ENCODE measurements at regions of chr11 and their contacts with region 1.

Region 1: DNA sequence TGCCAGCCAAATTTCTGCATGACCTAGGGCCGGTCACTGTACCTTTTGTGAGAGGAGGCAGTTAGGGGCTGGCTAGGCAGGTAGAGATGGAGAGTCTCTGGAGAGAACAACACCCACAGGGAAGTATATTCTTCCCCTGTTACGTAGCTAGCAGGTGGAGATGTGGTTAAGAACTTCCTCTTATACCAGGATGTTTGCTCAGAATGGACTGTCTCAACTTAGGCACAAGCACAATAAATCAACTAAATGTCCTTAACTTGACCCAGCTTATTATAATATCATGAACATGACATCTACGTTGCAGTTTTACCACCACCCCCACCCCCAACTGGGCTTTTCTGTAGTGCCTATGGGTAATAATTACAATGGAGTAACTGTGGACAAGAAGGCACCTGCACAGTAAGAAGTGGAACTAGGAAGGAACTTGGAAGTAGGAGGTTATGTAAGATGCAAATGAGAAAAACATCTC is 60.7 kb upstream of the MPEG1 start:
- DNase-seq: peak; percentile 97
- H3K4me3 ChIP-seq: peak overlapping the region; percentile 56
- H3K27ac ChIP-seq: peak overlapping the region; percentile 97
- H3K4me1 ChIP-seq: peaks cover 74% of the 10 kb centered on the region
- CTCF ChIP-seq: no peak

Region 2: DNA sequence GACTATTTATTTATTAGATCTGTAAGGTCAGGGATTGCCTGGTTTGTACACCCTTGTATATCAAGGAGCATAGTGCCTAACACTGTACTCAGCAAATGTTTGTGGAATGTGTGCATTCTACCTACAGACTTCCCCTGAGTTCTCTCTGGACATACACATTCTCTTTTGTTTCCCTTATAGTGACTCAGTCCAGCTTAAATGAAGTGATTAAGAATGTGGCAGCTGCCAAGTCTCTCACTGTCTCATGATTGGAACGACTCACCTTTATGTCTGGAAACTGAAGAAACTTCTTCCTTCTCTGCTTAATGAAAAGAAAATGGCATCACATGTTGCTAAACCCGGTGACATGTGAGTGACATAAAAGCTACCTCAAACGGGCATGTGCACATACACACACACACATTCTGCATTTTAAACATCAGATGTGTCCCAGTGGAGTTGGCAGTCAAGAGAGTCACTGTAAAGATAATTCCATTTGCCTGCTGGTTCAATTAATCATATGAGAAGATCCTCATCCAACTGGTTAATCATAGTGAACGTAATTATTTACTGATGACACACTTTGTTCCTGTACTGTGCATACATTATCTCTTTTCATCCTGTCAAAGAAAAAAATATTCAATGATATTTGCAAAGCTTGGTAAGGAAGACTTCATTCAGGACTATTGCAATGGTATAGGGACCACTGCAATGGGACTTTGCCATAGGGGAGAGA is 584.5 kb before region 1 on chr11:
- CTCF ChIA-PET with region 1: no interaction called
- POLR2A ChIA-PET with region 1: no interaction called
- intact Hi-C with region 1: no loop called
- DNase-seq: no peak
- H3K4me3 ChIP-seq: no peak overlapping the region
- H3K27ac ChIP-seq: no peak overlapping the region
- H3K4me1 ChIP-seq: no peaks in the 10 kb centered on the region
- CTCF ChIP-seq: no peak

Region 3: DNA sequence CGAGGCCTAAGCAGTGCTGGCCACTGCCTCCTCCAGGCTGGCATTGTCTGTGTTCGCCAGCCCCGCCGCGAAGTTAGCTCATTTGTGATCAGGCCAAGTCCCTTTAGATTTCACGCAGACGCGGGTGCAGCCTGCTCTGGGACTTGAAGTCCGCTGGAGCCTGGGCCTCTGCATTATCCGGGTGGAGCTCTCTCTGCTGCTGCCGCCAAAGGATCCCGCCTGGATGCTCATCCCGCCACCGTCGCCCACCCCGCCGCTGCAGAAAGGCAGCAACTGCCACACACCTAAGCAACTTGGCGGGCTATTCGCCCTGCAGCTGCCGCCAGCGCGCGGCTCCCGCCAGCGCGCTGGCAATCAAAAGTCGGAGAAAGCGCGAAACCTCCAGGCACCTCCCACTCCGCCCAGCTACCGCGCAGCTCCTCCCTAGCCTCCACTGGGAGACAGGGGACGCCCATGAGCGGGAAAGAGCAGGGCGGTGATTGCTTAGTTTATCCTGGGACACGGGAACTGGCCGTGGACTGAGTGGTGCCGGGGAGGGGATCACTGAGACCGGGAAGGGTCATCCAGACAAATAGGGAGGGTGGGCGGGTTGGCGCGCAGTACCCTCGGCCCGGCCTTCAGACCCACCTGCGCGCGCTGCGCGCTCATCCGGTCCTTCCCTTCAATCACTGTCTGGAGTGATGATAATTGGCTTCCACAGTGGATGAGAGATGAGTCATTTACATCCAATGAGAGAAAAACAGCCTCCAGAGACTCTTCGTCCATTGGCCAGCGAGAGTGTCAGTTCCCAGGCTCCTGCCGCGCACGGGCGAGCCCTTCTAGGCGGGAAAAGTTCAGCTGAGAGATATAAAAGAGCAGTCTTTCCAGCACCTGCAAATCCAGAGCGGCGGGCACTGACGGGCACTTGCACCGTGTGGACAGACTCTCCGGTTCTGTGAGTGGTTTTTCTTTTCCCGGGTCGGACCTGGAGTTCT is 166.8 kb before region 1 on chr11 and contains the start of gene FAM111B:
- CTCF ChIA-PET with region 1: no interaction called
- POLR2A ChIA-PET with region 1: interaction called, 5 read pairs
- intact Hi-C with region 1: loop called (anchors 2 kb)
- DNase-seq: peak; percentile 91
- H3K4me3 ChIP-seq: peak within 1 kb of the TSS; percentile 88
- H3K27ac ChIP-seq: peak within 1 kb of the TSS; percentile 70
- H3K4me1 ChIP-seq: peaks cover 77% of the 10 kb centered on the region
- CTCF ChIP-seq: peak; percentile 35
- total RNA-seq, gene FAM111B: 30.3 and 37.6 TPM in 2 replicates

Region 4: GRCh38 chr11:59263225-59263894 is 10.0 kb before region 1 on chr11:
- CTCF ChIA-PET with region 1: interaction called, 10 read pairs
- POLR2A ChIA-PET with region 1: interaction called, 39 read pairs
- intact Hi-C with region 1: no loop called
- DNase-seq: peak; percentile 84
- H3K4me3 ChIP-seq: no peak overlapping the region
- H3K27ac ChIP-seq: no peak overlapping the region
- H3K4me1 ChIP-seq: peaks cover 56% of the 10 kb centered on the region
- CTCF ChIP-seq: peak; percentile 92

Region 5: DNA sequence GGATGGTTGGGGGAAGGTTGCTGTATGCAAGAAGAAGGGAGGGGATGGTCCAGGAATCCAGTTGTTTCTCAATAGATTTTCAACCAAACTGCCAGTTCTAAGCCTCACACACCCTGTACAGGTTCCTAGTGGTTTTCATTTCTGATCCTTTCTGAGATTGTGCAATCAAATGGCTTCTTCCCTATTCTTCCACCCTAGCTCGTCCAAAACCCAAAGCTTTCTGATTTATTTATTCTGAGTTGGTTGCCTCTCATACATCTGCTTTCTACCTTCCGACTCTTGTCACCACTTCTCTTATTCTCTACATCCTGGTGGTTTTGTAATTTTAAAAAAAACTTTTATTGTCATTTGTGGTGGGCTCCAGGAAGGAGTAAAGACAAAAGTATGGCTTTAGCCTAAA is 140.2 kb after region 1 on chr11:
- CTCF ChIA-PET with region 1: no interaction called
- POLR2A ChIA-PET with region 1: no interaction called
- intact Hi-C with region 1: no loop called
- DNase-seq: no peak
- H3K4me3 ChIP-seq: no peak overlapping the region
- H3K27ac ChIP-seq: no peak overlapping the region
- H3K4me1 ChIP-seq: no peaks in the 10 kb centered on the region
- CTCF ChIP-seq: no peak

Region 6: DNA sequence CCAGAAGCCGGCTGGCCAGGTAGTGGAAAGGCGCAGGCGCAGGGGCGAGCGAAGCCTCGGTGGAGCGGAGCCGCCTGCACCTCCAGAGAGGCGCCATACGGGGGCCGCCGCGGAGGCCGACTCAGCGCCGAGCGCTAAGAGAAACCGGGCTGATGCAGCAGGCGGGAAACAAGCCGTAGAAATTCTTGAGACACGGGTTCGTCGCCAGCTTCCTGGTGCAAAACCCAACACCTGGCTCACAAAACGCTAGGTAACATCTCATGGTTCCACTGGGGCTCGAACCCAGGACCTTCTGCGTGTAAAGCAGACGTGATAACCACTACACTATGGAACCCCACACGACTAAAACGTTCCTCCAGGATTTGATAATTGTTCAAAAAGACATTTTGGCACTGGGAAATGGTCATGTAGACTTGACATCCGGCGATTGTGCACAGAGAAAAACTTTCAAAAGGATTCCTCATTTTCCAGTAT is 277.0 kb after region 1 on chr11:
- CTCF ChIA-PET with region 1: no interaction called
- POLR2A ChIA-PET with region 1: interaction called, 3 read pairs
- intact Hi-C with region 1: loop called (anchors 5 kb)
- DNase-seq: peak; percentile 95
- H3K4me3 ChIP-seq: peak overlapping the region; percentile 72
- H3K27ac ChIP-seq: peak overlapping the region; percentile 91
- H3K4me1 ChIP-seq: peaks cover 24% of the 10 kb centered on the region
- CTCF ChIP-seq: peak; percentile 65

Region 7: GRCh38 chr11:59668950-59669610 is 395.7 kb after region 1 on chr11 and contains the start of gene PATL1:
- CTCF ChIA-PET with region 1: no interaction called
- POLR2A ChIA-PET with region 1: no interaction called
- intact Hi-C with region 1: loop called (anchors 5 kb)
- DNase-seq: peak; percentile 98
- H3K4me3 ChIP-seq: peak within 1 kb of the TSS; percentile 99
- H3K27ac ChIP-seq: peak within 1 kb of the TSS; percentile 47
- H3K4me1 ChIP-seq: peaks cover 19% of the 10 kb centered on the region
- CTCF ChIP-seq: no peak
- total RNA-seq, gene PATL1: 14.7 and 15.2 TPM in 2 replicates

Region 8: DNA sequence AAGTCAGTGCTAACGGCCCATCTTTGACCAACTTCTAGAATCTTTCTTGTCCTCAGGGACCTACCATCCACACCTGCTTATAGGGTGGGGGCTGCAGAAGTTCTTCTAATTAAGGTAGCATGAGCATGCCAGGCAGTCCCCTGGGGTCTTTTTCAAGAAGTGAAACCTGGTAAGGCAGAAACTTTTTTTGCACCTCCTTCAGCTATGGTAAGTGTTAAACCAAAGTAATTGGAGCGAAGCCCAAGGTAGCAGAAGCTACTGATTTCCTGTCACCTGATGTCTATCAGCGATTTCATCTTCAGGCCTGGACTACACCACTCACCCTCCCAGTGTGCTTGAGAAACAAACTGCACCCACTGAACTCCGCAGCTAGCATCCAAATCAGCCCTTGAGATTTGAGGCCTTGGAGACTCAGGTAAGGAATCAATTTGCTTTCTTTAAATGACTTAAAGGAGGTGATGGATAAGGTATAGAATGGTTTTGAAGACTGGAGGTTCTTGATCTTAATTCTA is 1182.2 kb after region 1 on chr11 and contains the start of gene MS4A1:
- CTCF ChIA-PET with region 1: no interaction called
- POLR2A ChIA-PET with region 1: no interaction called
- intact Hi-C with region 1: loop called (anchors 2 kb)
- DNase-seq: peak; percentile 100
- H3K4me3 ChIP-seq: peak within 1 kb of the TSS; percentile 84
- H3K27ac ChIP-seq: peak within 1 kb of the TSS; percentile 100
- H3K4me1 ChIP-seq: peaks cover 49% of the 10 kb centered on the region
- CTCF ChIP-seq: no peak
- total RNA-seq, gene MS4A1: 435 and 488 TPM in 2 replicates